ENCODE measurements at regions of chr12 and their contacts with region 1.

Region 1: GRCh38 chr12:121701667-121702277 is 10.8 kb upstream of the TMEM120B start:
- DNase-seq: no peak
- CTCF ChIP-seq: no peak

Region 2: DNA sequence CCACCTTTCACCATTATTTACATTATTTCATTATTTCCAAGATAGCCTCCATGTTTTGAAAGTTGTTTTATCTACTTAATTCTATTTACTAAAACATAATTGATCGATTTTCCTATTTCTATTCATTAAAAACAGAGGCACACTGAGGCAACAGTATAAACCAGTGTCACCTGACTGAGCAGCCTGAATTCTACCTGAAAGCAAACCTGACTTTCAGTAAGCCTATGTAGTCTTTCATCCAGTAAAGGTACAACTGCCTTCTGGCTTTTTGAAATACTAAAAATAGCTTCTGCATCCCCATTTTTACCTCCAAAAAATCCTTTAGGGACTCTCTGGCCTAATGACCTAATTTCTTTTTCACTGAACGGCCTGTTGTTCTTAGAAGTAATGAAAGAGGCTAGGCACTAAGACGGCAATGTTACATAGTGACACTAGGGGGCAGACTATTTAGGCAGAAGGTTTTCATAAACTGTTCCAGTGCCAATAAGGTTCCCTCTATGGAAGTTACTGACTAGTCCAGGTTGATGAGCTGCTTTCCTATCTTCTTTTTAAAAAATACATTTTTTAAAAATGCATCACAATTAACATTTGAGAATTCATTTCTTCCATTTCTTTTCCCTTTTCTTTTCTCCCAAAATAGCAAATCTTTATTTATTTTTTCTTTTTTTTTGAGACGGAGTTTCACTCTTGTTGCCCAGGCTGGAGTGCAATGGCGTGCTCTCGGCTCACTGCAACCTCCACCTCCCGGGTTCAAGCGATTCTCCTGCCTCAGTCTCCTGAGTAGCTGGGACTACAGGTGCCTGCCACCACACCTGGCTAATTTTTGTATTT is 367.0 kb before region 1 on chr12:
- in situ Hi-C with region 1: no loop called
- DNase-seq: peak; percentile 71
- CTCF ChIP-seq: peak; percentile 68

Region 3: GRCh38 chr12:121626087-121626852 is 75.5 kb before region 1 on chr12 and contains the start of gene ORAI1:
- in situ Hi-C with region 1: no loop called
- DNase-seq: peak; percentile 95
- CTCF ChIP-seq: peak; percentile 15

Region 4: DNA sequence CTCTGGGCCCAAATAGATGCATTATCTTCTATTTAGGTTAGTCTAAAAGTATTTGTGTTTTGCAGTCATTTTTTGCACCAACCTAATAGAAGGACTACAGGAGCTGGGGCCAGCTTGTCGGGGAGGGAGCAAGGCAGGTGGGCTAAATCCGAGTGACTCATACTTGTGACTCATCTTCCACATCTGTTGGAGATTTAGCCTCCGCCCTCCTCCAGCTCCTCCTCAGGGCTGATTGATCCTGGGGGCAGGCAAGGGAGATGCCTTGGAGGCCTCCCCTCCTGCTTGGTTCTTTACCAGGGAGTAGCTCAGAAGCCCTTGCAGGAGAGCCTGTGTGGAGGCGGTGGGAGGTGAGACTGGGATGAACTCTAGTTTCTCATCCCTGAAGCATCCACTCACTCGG is 63.8 kb after region 1 on chr12:
- in situ Hi-C with region 1: loop called (anchors 5 kb)
- DNase-seq: no peak
- CTCF ChIP-seq: no peak